GM12878 (cell line): ENCODE measurements at regions of chr5 and their contacts with region 1.

Region 1: DNA sequence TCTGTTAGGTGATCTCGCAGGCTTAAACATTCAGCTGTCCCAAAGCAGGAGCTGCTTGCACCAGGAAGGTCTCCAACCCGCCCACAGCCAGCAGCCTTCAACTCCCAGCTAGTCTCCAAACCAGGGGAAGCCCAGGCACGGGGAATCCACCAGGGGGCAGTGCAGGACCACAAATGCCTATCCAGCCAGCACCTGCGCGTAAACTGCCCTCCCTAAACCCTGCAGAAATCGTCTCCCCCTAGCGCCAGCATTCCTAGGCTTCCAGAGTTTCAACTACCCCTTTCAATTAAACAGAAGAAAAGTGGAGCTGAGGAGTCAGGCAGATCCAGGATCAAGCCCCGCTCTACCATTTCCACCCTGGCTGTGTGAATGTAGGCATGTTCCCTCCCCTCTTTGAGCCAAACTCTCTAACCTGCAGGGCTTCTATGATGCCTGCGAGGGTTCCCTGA is 72.0 kb downstream of the HRH2 start:
- DNase-seq: peak; percentile 20
- ATAC-seq: peak; percentile 100
- H3K4me3 ChIP-seq: no peak overlapping the region
- H3K27ac ChIP-seq: no peak overlapping the region
- H3K4me1 ChIP-seq: no peaks in the 10 kb centered on the region
- H3K27me3 ChIP-seq: no peaks in the 10 kb centered on the region
- CTCF ChIP-seq: peak; percentile 92 to 98 (median 95)
- EP300 ChIP-seq: no peak
- POLR2A ChIP-seq: no peak
- RAD21 ChIP-seq: peak; percentile 94

Region 2: DNA sequence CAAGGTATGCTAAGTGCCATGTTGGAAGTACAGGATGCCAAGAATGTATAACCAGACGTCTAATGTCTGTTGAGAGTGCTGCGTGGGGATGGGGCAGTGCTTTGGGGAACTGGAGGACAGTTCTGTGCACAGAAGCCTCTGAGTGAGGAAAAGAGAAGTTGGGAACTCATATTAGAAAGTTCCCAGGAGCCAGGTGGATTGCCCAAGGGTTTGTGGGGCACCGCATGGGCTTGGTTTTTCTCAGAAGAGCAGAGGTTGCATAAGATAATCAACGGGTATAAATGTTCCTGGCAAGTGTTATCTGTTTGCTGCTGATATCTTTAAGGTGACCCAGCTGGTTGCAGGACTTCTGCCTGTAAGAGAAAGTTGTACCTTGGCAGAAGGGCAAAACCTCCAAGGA is 58.8 kb before region 1 on chr5:
- CTCF ChIA-PET with region 1: no interaction called
- POLR2A ChIA-PET with region 1: no interaction called
- RAD21 ChIA-PET with region 1: no interaction called
- SMC1A ChIA-PET with region 1: no interaction called
- in situ Hi-C with region 1: no loop called
- intact Hi-C with region 1: no loop called
- DNase-seq: no peak
- ATAC-seq: no peak
- H3K4me3 ChIP-seq: no peak overlapping the region
- H3K27ac ChIP-seq: no peak overlapping the region
- H3K4me1 ChIP-seq: no peaks in the 10 kb centered on the region
- H3K27me3 ChIP-seq: peaks cover 0 to 3% of the 10 kb centered on the region in 2 experiments; a peak in 2 of 4 replicates
- CTCF ChIP-seq: no peak
- EP300 ChIP-seq: no peak
- POLR2A ChIP-seq: no peak
- RAD21 ChIP-seq: no peak

Region 3: DNA sequence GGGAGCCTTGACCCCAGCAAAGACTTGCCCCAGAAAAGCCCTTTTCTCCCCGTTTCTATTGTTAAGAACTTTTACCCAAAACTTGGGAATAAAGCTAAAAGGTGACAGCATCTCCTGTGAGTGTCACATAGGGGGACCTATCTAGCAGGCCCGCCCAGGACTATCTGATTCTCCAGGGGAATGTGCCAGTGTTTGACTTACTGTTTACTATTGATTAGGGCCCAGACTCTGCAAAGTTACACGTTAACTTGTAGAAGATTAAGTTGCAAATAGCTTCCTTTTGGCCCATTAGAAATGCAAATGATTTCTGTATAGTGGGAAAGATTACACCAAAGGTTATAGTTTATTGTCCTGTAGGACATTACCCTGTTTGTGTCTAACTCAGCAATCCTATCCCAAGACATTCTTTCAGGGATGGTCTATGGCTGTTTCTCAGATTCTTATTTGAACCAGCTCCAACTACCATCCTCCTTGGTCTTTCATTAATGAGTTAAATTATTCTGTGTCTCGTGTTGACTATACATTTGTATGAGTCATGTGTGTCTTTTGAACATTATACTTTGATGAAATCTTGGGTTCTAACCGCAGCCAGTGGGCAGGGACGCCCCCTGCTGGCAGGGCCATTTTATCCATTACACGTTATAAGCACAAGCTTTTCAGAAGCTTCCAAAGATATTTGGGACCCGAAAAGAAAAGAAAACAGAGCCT is 11.3 kb before region 1 on chr5:
- CTCF ChIA-PET with region 1: interaction called, 6 read pairs
- POLR2A ChIA-PET with region 1: no interaction called
- RAD21 ChIA-PET with region 1: no interaction called
- SMC1A ChIA-PET with region 1: interaction called, 10 read pairs
- in situ Hi-C with region 1: no loop called
- intact Hi-C with region 1: no loop called
- DNase-seq: no peak
- ATAC-seq: no peak
- H3K4me3 ChIP-seq: no peak overlapping the region
- H3K27ac ChIP-seq: no peak overlapping the region
- H3K4me1 ChIP-seq: no peaks in the 10 kb centered on the region
- H3K27me3 ChIP-seq: no peaks in the 10 kb centered on the region
- CTCF ChIP-seq: peak; percentile 32 to 40 (median 38); a peak in 3 of 6 replicates
- EP300 ChIP-seq: no peak
- POLR2A ChIP-seq: no peak
- RAD21 ChIP-seq: peak; percentile 38; the same call in 1 of the 2 replicates

Region 4: DNA sequence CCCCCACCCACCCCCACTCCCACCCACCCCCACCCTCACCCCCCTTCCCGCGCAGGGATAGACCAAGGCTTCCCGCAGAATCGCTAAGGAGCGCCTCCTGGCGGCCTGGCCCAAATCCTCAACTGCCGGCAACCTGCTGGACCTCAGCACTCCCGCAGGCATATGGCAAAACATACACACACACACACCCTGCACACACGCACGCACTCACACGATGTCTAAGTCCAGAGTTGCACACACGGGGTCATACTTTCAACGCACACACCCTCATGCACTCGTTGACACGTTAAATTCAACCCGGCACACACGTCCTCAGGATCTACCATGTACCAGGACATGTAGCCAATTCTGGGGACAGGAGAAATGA is 143.2 kb after region 1 on chr5:
- CTCF ChIA-PET with region 1: interaction called, 4 read pairs
- POLR2A ChIA-PET with region 1: no interaction called
- RAD21 ChIA-PET with region 1: no interaction called
- SMC1A ChIA-PET with region 1: no interaction called
- in situ Hi-C with region 1: no loop called
- intact Hi-C with region 1: loop called (anchors 10 kb)
- DNase-seq: no peak
- ATAC-seq: peak; percentile 57; the same call in 2 of the 3 replicates
- H3K4me3 ChIP-seq: no peak overlapping the region
- H3K27ac ChIP-seq: no peak overlapping the region
- H3K4me1 ChIP-seq: no peaks in the 10 kb centered on the region
- H3K27me3 ChIP-seq: peaks cover 3 to 6% of the 10 kb centered on the region in 2 experiments
- CTCF ChIP-seq: peak; percentile 28 to 38 (median 36); a peak in 5 of 6 replicates
- EP300 ChIP-seq: no peak
- POLR2A ChIP-seq: no peak
- RAD21 ChIP-seq: 0 out of 2 replicates have a peak, but pooled peaks have one; percentile 12